Naive thymus-derived CD4-positive, alpha-beta T cell (primary cell): ENCODE measurements at regions of chr6 and their contacts with region 1.

Region 1: GRCh38 chr6:105810105-105810921 is 275.8 kb upstream of the PRDM1 start:
- DNase-seq: peak in 1 of 9 donors; percentile 69
- ATAC-seq: peak; percentile 72
- H3K4me3 ChIP-seq: no peak overlapping the region
- H3K4me3 Mint-ChIP-seq: peak overlapping the region in 2 of 10 donors; percentile 17 to 61
- H3K27ac ChIP-seq: no peak overlapping the region
- H3K27ac Mint-ChIP-seq: peak overlapping the region in 3 of 9 donors; percentile 26 to 78 (median 55)
- H3K4me1 ChIP-seq: peaks cover 0 to 30% of the 10 kb centered on the region in 2 donors
- H3K4me1 Mint-ChIP-seq: peaks cover 0 to 74% (median 23%) of the 10 kb centered on the region in 7 donors
- H3K27me3 ChIP-seq: no peaks in the 10 kb centered on the region
- H3K27me3 Mint-ChIP-seq: no peaks in the 10 kb centered on the region

Region 2: DNA sequence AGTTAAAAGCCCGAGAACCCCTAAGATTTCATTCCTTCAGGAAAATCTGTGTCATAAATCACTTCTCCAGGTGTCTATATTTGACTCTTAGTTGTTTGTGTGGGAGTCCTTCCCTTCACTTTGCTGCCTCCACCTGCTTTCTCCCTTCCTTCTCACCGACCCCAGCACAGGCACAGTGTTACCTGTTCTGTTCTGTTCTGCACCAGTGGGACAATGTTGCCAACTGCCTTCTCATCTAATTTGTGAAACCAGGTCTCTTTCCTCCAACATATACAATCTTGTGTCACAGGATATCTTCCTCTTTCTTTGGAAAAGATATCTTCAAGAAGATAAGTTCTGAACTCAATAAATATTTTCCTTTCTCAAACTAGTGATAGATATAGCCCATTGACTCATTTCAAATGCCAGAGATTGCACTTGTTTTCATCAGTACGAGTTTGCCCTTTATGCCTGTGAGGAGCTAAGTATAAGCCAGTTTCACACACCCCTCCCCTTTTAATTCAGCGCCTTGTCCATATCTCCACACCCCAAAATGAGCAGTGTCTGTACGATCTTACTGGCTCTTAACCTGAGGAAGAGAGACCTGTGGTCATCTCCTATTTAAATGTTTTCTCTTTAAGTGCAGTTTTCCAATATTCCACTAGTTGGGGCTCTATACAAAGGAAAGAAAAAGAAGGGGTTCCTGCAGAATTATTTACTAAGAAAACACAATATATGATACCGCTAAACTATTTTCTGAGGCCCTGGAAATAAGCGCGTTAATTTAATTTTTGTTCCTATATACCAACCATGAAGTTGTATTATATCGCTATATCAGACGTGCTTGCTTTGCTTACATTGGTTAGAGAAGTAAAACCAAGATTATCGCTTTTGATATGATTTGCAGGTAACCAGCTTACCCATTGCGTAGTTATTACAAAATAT is 325.8 kb before region 1 on chr6:
- CTCF ChIA-PET with region 1: no interaction called
- POLR2A ChIA-PET with region 1: no interaction called
- intact Hi-C with region 1: loop called in 1 of 2 experiments (anchors 10 kb)
- DNase-seq: peak in 5 of 9 donors; percentile 7 to 36 (median 20)
- ATAC-seq: peak; percentile 59
- H3K4me3 ChIP-seq: no peak overlapping the region
- H3K4me3 Mint-ChIP-seq: no peak overlapping the region
- H3K27ac ChIP-seq: no peak overlapping the region
- H3K27ac Mint-ChIP-seq: peak overlapping the region in 2 of 9 donors; percentile 20 to 52
- H3K4me1 ChIP-seq: peaks cover 0 to 35% of the 10 kb centered on the region in 2 donors
- H3K4me1 Mint-ChIP-seq: peaks cover 0 to 63% (median 0%) of the 10 kb centered on the region in 7 donors
- H3K27me3 ChIP-seq: no peaks in the 10 kb centered on the region
- H3K27me3 Mint-ChIP-seq: peaks cover 11 to 16% (median 13%) of the 10 kb centered on the region in 5 donors

Region 3: GRCh38 chr6:105793130-105793529 is 17.2 kb before region 1 on chr6:
- CTCF ChIA-PET with region 1: no interaction called
- POLR2A ChIA-PET with region 1: no interaction called
- intact Hi-C with region 1: loop called in 1 of 2 experiments (anchors 2 kb)
- DNase-seq: peak in 3 of 9 donors; percentile 9 to 23 (median 15)
- ATAC-seq: peak; percentile 76
- H3K4me3 ChIP-seq: no peak overlapping the region
- H3K4me3 Mint-ChIP-seq: peak overlapping the region in 1 of 10 donors; percentile 28
- H3K27ac ChIP-seq: no peak overlapping the region
- H3K27ac Mint-ChIP-seq: peak overlapping the region in 1 of 9 donors; percentile 68
- H3K4me1 ChIP-seq: peaks cover 0 to 3% of the 10 kb centered on the region in 2 donors
- H3K4me1 Mint-ChIP-seq: peaks cover 6 to 79% (median 12%) of the 10 kb centered on the region in 7 donors
- H3K27me3 ChIP-seq: no peaks in the 10 kb centered on the region
- H3K27me3 Mint-ChIP-seq: peaks cover 0 to under 1% (median 0%) of the 10 kb centered on the region in 5 donors

Region 4: DNA sequence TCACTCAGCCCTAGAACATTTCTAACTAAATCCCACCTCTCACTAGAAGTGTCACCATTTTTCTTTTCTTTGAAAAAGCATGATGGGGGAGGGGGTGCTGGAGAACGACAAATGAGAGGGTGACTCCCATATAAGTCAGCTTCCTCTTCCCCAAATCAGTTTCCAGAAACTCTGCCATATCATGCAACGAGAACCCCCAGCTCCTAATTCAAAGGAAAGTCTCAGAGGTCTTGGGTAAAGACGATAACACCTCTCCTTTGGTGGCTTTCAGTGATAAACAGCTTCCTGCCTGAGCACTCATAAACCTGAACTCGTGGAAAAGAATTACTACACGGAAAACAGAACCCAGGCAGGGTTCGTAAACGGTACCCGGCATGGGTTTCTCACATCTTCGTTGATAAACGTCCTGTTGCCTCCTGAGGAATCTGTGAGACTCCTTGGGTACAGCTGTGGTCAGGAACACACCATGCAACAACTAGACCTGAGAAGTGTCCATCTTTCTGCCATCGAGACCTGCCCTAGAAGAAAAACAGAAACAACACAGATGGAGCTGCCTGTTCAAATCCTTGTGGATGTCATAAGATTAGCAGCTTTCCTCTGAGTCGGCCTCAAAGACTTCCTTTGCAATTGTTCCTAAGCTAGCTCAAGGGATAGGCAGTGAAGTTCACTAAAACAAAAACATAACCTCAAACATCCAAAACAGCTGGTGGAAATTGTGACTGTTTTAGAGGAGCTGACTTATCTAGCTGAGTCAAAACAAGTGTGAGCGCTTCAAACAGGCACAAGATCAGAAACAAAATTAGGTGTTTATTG is 90.0 kb after region 1 on chr6:
- CTCF ChIA-PET with region 1: no interaction called
- POLR2A ChIA-PET with region 1: no interaction called
- intact Hi-C with region 1: loop called in 1 of 2 experiments (anchors 5 kb)
- DNase-seq: peak in 2 of 9 donors; percentile 11 to 33
- ATAC-seq: peak; percentile 52
- H3K4me3 ChIP-seq: no peak overlapping the region
- H3K4me3 Mint-ChIP-seq: peak overlapping the region in 9 of 10 donors; percentile 23 to 84 (median 70)
- H3K27ac ChIP-seq: no peak overlapping the region
- H3K27ac Mint-ChIP-seq: peak overlapping the region in 2 of 9 donors; percentile 53 to 95
- H3K4me1 ChIP-seq: peaks cover 4 to 8% of the 10 kb centered on the region in 2 donors
- H3K4me1 Mint-ChIP-seq: peaks cover 9 to 26% (median 12%) of the 10 kb centered on the region in 7 donors
- H3K27me3 ChIP-seq: no peaks in the 10 kb centered on the region
- H3K27me3 Mint-ChIP-seq: peaks cover 0 to 4% (median 0%) of the 10 kb centered on the region in 5 donors